ENCODE measurements at regions of chr1 and their contacts with region 1.

Region 1: GRCh38 chr1:216686860-216687766 is 36.1 kb downstream of the ESRRG start:
- DNase-seq: no peak
- H3K4me3 Mint-ChIP-seq: no peak overlapping the region
- H3K27ac Mint-ChIP-seq: no peak overlapping the region
- H3K4me1 Mint-ChIP-seq: no peaks in the 10 kb centered on the region
- H3K27me3 Mint-ChIP-seq: no peaks in the 10 kb centered on the region
- CTCF ChIP-seq: no peak

Region 2: DNA sequence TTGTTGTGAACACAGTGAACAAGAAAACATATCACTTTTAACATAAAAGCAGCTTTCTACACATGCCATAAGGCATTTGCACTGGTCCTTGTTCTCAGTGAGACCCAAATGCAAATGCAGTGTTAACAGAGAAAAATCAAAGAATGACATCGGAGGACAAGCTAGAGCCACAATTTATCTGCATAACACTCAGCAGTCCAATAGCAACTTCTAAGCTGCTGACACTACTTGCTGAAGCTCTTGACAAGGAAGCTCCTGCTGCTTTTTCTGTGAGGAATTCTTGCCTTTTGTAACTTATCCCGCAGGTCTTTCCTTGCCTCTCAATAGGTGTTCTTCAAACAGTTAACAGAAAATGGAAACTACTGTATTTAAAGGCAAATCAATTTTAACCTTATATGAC is 298.6 kb before region 1 on chr1:
- CTCF ChIA-PET with region 1: no interaction called
- intact Hi-C with region 1: no loop called
- DNase-seq: no peak
- H3K4me3 Mint-ChIP-seq: no peak overlapping the region
- H3K27ac Mint-ChIP-seq: no peak overlapping the region
- H3K4me1 Mint-ChIP-seq: no peaks in the 10 kb centered on the region
- H3K27me3 Mint-ChIP-seq: no peaks in the 10 kb centered on the region
- CTCF ChIP-seq: no peak

Region 3: GRCh38 chr1:216502528-216503162 is 184.5 kb before region 1 on chr1:
- CTCF ChIA-PET with region 1: no interaction called
- intact Hi-C with region 1: no loop called
- DNase-seq: no peak
- H3K4me3 Mint-ChIP-seq: no peak overlapping the region
- H3K27ac Mint-ChIP-seq: no peak overlapping the region
- H3K4me1 Mint-ChIP-seq: peaks cover 14% of the 10 kb centered on the region
- H3K27me3 Mint-ChIP-seq: no peaks in the 10 kb centered on the region
- CTCF ChIP-seq: no peak

Region 4: GRCh38 chr1:216670118-216670900 is 16.8 kb before region 1 on chr1:
- CTCF ChIA-PET with region 1: no interaction called
- intact Hi-C with region 1: no loop called
- DNase-seq: no peak
- H3K4me3 Mint-ChIP-seq: no peak overlapping the region
- H3K27ac Mint-ChIP-seq: no peak overlapping the region
- H3K4me1 Mint-ChIP-seq: no peaks in the 10 kb centered on the region
- H3K27me3 Mint-ChIP-seq: no peaks in the 10 kb centered on the region
- CTCF ChIP-seq: no peak

Region 5: DNA sequence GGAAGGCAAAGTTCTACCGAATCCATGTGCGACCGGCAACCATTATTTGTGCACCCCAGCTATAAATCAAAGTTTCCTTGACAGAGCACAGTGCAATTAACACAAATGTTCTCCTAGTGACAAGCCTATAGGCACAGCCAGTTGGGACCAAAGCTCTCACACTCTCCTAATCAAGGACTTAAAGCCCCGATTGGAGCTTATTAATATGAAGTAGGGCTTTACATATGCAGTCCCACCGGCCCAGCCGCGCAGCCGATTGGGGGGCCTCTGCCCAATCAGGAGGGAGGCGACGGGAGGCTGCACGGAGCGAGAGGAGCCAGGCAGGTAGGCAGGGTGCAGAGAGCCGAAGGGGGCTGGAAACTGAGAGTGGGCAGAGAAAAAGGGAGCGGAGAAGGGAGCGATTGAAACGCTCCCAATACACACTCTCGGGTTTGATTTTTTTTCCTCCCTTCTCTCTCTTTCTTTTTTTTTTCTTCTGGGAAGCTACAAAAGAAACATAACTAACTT is 36.2 kb after region 1 on chr1 and contains the start of gene ESRRG:
- CTCF ChIA-PET with region 1: no interaction called
- intact Hi-C with region 1: no loop called
- DNase-seq: peak; percentile 75
- H3K4me3 Mint-ChIP-seq: peak within 1 kb of the TSS; percentile 88
- H3K27ac Mint-ChIP-seq: peak within 1 kb of the TSS; percentile 10
- H3K4me1 Mint-ChIP-seq: peaks cover 19% of the 10 kb centered on the region
- H3K27me3 Mint-ChIP-seq: no peaks in the 10 kb centered on the region
- CTCF ChIP-seq: no peak
- total RNA-seq, gene ESRRG: 0.76 and 1.3 TPM in 2 replicates

Region 6: DNA sequence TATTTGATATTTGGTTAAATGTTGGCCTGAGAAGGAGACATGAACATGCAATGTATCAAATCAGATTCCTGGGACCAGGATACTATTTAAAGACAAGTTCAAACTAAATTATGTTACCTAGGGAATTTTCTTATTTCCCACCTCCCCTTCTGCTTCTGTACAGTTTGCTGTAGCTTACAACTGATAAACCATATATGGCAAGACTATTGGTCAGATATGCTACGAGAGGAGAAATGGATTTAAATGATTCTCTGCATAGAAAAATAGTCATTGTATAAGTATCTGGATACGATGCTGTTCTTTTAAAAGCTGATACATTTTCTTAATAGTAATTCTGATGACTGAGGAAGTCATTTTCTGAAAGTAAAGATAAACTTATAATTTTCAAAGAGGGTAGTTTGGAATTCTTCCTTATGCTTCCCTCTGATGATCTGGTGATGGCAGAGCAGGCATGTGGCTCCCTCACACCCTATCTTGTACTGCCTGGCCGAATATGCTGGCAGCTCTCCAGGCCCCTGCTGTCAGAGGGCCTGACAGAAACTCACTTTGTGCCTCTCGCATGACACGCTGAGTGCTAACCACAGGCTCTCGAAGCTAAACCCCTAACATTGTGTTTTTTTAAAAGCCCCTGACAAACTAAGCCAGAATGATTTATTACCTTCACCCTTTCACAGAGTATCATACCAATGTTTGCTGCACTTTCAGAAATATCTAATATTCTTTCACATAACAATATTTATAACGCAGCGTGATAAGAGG is 1617.3 kb after region 1 on chr1:
- CTCF ChIA-PET with region 1: interaction called, 11 read pairs
- intact Hi-C with region 1: no loop called
- DNase-seq: no peak
- H3K4me3 Mint-ChIP-seq: no peak overlapping the region
- H3K27ac Mint-ChIP-seq: no peak overlapping the region
- H3K4me1 Mint-ChIP-seq: peaks cover 8% of the 10 kb centered on the region
- H3K27me3 Mint-ChIP-seq: no peaks in the 10 kb centered on the region
- CTCF ChIP-seq: no peak